ENCODE measurements at regions of chr19 and their contacts with region 1.

Region 1: DNA sequence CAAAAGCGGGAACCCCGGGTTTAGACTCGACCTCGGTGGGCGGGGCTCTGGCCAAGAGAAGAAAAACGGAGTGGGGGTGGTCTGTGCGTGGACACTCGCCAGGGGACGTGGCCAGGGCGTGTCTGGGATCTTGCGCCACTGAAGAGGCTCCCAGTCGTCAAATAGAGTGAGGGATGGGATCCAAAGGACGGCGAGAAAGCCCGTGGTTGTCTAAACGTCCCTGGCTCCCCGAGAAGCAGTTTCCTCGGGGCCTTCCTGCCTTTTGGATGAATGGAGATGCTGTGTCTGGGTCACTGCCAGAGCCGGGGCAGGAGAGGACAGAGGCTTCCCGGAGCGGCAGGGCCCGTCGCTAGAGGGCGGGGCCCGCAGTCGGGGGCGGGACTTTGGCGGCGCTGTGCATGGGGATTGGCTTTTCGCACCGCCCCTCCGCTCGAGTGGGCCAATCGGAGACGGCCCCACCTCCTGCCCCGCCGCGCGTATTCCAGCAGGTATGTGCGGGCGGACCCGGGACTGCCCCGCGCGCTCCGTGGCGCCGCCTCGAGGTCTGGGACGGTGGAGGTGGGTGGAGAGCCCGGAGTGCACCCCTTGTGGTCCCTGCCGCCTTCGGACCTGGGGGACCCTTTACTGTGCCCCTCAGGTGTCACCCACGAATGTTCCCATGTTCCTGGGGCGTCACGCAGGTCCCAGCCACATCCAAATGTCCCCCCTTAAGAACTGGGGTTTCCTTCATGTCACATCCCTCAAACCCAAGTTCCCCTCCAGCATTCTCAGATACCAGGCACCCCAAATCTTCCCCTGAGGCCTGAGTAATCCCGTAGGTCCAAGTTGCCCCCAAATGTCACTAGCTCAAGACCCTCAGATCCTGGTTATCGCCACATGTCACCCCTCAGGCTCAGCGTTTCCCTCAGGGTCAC is 38.3 kb downstream of the ZSWIM4 start:
- DNase-seq: peak; percentile 97
- ATAC-seq: peak; percentile 93
- H3K4me3 ChIP-seq: peak overlapping the region; percentile 14
- H3K27ac ChIP-seq: peak overlapping the region; percentile 80
- H3K4me1 ChIP-seq: peaks cover 52% of the 10 kb centered on the region
- H3K27me3 ChIP-seq: no peaks in the 10 kb centered on the region
- CTCF ChIP-seq: peak; percentile 47

Region 2: GRCh38 chr19:13794757-13795589 is 38.6 kb before region 1 on chr19 and contains the start of gene ZSWIM4:
- intact Hi-C with region 1: loop called (anchors 5 kb)
- DNase-seq: peak; percentile 99
- ATAC-seq: peak; percentile 98
- H3K4me3 ChIP-seq: peak within 1 kb of the TSS; percentile 79
- H3K27ac ChIP-seq: peak within 1 kb of the TSS; percentile 94
- H3K4me1 ChIP-seq: peaks cover 23% of the 10 kb centered on the region
- H3K27me3 ChIP-seq: no peaks in the 10 kb centered on the region
- CTCF ChIP-seq: no peak
- total RNA-seq, gene ZSWIM4: 10.6 TPM